GM10248 (cell line): ENCODE measurements at regions of chr20 and their contacts with region 1.

Region 1: DNA sequence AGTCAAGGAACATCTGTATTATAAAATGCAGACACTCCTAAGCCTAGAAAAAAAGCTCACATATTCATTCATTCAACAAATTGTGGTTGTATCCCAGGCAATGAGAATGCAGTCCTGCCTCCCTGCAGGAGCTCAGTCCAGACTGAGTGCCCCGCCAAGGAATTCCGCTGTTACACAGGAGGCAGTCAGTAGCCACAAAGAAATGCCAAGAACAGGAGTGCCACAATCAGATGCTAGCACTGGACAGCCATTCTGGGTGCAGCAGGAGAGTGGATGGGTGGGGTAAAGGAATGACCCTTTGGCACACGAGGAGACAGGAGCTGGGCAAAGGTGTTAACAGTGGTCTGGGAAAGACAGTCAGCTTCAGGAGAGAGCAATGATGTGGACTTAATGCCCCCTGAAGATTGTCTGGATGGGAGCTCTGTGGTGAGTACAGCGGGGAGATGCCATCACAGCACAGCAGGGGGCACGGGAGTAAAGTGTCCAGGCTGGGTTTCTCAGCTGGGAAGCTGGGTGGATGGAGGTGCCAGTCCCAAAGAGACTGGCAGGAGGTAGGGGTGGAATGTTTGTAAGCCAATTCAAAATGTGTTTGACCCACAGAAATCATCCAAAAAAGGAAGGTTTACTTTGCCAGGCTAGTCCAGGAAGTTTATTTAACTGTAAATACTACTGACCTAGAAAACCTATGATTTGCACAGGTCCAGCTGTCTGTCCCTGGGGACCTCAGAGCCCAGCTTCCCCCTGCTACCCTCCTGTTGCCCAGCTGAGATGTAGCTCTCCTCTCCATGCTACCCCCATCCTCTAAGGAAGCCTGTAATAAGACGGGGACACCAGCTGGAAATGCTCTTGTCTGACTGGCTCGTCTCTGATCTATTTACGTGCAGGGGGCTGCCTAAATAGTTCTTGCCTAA is 84.1 kb downstream of the SLC23A2 start:
- DNase-seq: no peak
- CTCF ChIP-seq: no peak

Region 2: DNA sequence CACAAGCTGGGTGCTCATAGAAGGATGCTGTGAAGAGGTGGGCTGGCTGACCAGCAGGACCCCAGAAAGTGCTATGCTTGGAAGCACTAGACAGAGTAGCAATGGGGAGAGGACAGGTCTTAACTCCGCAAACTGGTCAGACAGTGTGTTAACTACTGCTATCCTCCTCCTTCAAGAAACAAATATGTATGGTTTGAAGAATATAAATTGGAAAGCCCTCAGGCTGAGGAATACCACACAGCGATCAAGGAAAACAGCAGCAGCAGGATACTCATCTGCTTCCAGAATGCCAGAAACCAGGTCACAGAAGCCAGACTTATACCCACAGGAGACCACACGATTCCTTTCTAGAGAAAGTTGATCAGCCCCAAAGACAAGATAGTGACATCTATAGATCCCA is 10.3 kb before region 1 on chr20:
- CTCF ChIA-PET with region 1: interaction called, 17 read pairs
- POLR2A ChIA-PET with region 1: no interaction called
- DNase-seq: no peak
- CTCF ChIP-seq: no peak